Activated CD4-positive, alpha-beta memory T cell treated with anti-CD3 and anti-CD28 coated beads, Interleukin-2, amount 10 ng/mL, durations not matched to agents 7 days and 5 days (primary cell): ENCODE measurements at regions of chr15 and their contacts with region 1.

Region 1: DNA sequence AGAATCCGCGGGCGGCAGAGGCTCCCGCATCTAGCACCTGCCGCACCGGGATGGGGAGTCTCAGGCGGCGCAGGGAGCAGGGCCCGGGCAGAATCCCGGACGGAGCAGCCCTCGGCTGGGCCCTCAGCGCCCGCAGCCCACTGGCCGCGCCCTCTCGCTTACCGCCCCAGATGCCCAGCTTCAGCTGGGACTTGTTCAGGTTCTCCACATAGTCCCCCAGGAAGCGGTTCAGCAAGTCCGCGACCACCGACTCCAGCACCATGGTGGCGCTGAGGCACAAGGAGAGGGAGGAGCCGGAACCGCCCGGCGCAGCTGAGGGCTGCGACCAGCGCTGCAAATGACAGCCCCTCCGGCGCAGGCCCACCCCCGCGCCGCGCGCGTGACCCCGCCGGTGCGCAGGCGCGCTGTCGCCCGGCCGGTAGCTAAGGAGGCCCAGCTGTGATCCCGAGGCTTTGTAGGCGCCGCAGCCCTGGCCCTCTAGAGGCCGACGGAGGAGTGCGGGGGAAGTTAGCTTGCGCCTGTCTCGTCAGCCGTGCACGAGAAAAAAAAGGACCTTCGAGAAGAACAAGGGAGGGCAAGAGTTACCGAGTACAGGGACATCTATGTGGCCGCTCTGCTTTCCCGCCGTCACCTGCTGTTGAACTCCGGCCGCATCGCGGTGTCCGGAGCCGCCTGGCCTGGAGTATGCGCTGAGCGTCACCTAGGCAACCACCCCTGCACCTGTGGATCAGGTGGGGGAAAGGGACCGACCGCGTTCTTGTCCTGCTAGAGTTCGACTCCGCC is at the start of gene VPS13C:
- DNase-seq: peak; percentile 94
- H3K4me3 Mint-ChIP-seq: peak within 1 kb of the TSS; percentile 84
- H3K27ac Mint-ChIP-seq: peak within 1 kb of the TSS; percentile 94
- H3K4me1 Mint-ChIP-seq: peaks cover 36% of the 10 kb centered on the region
- H3K27me3 Mint-ChIP-seq: peaks cover 15% of the 10 kb centered on the region
- total RNA-seq, gene VPS13C: 63.6 to 76.7 TPM

Region 2: DNA sequence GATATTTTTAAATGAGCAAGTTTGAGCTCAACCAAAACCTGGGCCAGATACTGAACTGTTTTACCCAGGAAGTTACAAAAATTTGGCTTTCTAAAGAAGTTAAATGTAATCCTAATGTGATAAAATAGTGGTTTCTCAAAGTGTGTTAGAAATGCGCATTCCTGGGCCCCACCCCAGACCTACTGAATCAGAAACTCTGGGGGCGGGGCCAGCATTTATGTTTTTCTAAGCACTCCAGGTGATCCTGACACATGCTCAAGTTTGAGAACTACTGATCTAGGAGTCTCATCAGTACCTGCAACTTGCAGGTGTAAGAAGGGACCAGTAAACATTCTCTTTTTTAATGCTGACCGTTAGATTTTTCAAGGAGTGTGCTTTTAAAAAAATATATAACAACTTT is 190.6 kb before region 1 on chr15:
- CTCF ChIA-PET with region 1: interaction called, 10 read pairs
- POLR2A ChIA-PET with region 1: no interaction called
- DNase-seq: no peak
- H3K4me3 Mint-ChIP-seq: no peak overlapping the region
- H3K27ac Mint-ChIP-seq: no peak overlapping the region
- H3K4me1 Mint-ChIP-seq: no peaks in the 10 kb centered on the region
- H3K27me3 Mint-ChIP-seq: no peaks in the 10 kb centered on the region

Region 3: GRCh38 chr15:62071711-62072308 is 11.5 kb after region 1 on chr15:
- CTCF ChIA-PET with region 1: interaction called, 19 read pairs
- POLR2A ChIA-PET with region 1: interaction called, 5 read pairs
- DNase-seq: no peak
- H3K4me3 Mint-ChIP-seq: no peak overlapping the region
- H3K27ac Mint-ChIP-seq: no peak overlapping the region
- H3K4me1 Mint-ChIP-seq: peaks cover 14% of the 10 kb centered on the region
- H3K27me3 Mint-ChIP-seq: peaks cover 22% of the 10 kb centered on the region